ENCODE measurements at regions of chr15 and their contacts with region 1.

Region 1: GRCh38 chr15:72272213-72273002 is at the start of gene PARP6:
- DNase-seq: peak; percentile 99
- H3K4me3 ChIP-seq: peak within 1 kb of the TSS; percentile 57 to 88 (median 80)
- H3K27ac ChIP-seq: peak within 1 kb of the TSS; percentile 52 to 81 (median 78)
- H3K4me1 ChIP-seq: peaks cover 9 to 21% of the 10 kb centered on the region in 2 donors
- H3K27me3 ChIP-seq: no peaks in the 10 kb centered on the region
- CTCF ChIP-seq: peak; percentile 30 to 94 (median 63)
- POLR2A ChIP-seq: peak in 1 of 2 donors; percentile 75
- total RNA-seq, gene PARP6: 54.2 to 98.0 (median 70.4) TPM

Region 2: DNA sequence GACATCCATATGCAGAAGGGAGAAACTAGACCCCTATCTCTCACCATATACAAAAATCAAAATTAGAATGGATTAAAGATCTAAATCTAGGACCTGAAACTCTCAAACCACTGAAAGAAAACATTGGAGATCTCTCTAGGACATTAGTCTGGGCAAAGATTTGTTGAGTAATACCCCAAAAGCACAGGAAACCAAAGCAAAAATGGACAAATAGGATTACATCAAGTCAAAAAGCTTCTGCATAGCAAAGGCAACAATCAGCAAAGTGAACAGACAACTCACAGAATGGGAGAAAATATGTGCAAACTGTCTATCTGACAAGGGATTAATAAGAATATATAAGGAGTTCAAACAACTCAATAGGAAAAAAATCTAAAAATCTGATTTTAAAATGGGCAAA is 209.2 kb before region 1 on chr15:
- intact Hi-C with region 1: no loop called
- DNase-seq: no peak
- H3K4me3 ChIP-seq: no peak overlapping the region
- H3K27ac ChIP-seq: no peak overlapping the region
- H3K4me1 ChIP-seq: peaks cover 6 to 29% of the 10 kb centered on the region in 2 donors
- H3K27me3 ChIP-seq: no peaks in the 10 kb centered on the region
- CTCF ChIP-seq: no peak
- POLR2A ChIP-seq: no peak

Region 3: GRCh38 chr15:72199711-72200212 is 72.6 kb before region 1 on chr15:
- intact Hi-C with region 1: loop called (anchors 5 kb)
- DNase-seq: peak; percentile 85 to 86
- H3K4me3 ChIP-seq: no peak overlapping the region
- H3K27ac ChIP-seq: no peak overlapping the region
- H3K4me1 ChIP-seq: peaks cover 6 to 33% of the 10 kb centered on the region in 2 donors
- H3K27me3 ChIP-seq: no peaks in the 10 kb centered on the region
- CTCF ChIP-seq: peak; percentile 89 to 94 (median 92)
- POLR2A ChIP-seq: no peak

Region 4: GRCh38 chr15:72503147-72503546 is 230.7 kb after region 1 on chr15:
- intact Hi-C with region 1: no loop called
- DNase-seq: no peak
- H3K4me3 ChIP-seq: no peak overlapping the region
- H3K27ac ChIP-seq: no peak overlapping the region
- H3K4me1 ChIP-seq: peaks cover 14 to 18% of the 10 kb centered on the region in 2 donors
- H3K27me3 ChIP-seq: no peaks in the 10 kb centered on the region
- CTCF ChIP-seq: no peak
- POLR2A ChIP-seq: no peak